Activated CD4-positive, alpha-beta memory T cell treated with anti-CD3 and anti-CD28 coated beads, Interleukin-2, amount 10 ng/mL, durations not matched to agents 7 days and 5 days (primary cell): ENCODE measurements at regions of chr4 and their contacts with region 1.

Region 1: DNA sequence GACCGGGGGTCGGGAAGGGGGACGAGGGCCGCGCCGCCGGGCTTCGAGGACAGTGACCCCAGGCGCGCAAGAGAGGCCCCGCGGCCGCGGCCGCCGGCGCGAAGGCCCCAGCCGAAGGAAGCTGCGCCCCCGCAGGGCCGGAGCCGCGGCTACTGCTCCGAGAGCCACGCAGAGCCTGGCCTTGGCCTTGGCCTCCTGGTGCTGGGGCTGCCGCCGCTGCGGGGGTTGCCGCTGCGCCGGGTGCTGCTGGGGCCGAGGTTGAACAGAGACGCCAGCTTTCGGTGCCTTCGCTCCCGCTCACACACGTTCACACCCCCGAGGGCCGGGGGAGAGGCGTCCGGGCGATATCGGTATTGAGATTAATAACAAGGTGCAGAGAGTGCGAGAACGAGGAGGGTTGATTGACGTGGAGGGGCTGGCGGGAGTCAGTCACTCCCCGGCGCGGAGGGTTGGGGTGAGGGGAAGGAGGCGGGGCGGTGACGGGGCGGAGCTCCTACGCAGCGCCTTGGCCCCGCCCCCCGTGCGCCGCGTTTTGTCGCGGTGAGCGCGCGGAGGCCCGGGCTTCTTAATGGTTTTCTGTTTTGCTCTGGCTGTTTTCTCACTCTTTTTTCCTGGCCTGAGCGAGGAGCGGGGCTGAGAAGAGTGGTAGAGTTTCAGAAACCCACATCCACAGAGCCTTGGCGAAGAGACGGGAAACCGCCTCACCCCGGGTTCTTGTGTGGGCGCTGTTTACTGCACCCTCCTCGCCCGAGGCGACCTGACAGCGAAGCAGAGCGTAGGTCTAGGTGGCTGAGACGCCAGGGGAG is 878 bp upstream of the CNOT6L start:
- DNase-seq: peak; percentile 95
- H3K4me3 Mint-ChIP-seq: peak overlapping the region; percentile 96
- H3K27ac Mint-ChIP-seq: peak overlapping the region; percentile 100
- H3K4me1 Mint-ChIP-seq: peaks cover 45% of the 10 kb centered on the region
- H3K27me3 Mint-ChIP-seq: no peaks in the 10 kb centered on the region

Region 2: GRCh38 chr4:77715414-77716290 is 104.4 kb before region 1 on chr4:
- CTCF ChIA-PET with region 1: no interaction called
- POLR2A ChIA-PET with region 1: interaction called, 11 read pairs
- DNase-seq: no peak
- H3K4me3 Mint-ChIP-seq: no peak overlapping the region
- H3K27ac Mint-ChIP-seq: peak overlapping the region; percentile 54
- H3K4me1 Mint-ChIP-seq: peaks cover 28% of the 10 kb centered on the region
- H3K27me3 Mint-ChIP-seq: no peaks in the 10 kb centered on the region

Region 3: DNA sequence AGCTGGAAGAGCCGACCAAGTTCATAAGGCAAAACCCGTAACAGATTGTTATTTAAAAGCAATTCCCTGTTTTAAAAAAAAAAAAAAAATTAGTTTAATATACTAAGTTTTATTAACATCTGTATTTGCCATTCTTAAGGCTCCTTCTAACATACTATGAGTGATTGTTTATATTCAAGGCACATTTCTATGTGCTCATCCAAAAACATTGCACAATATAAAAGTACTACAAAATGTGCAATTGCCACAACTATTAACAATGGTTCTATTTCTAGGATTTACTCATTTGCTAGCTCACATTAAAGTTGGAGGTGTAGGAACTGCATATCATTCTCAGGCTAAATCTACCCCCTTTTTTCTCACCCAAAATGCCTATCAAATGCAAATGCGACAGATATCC is 46.9 kb before region 1 on chr4:
- CTCF ChIA-PET with region 1: no interaction called
- POLR2A ChIA-PET with region 1: no interaction called
- DNase-seq: no peak
- H3K4me3 Mint-ChIP-seq: no peak overlapping the region
- H3K27ac Mint-ChIP-seq: no peak overlapping the region
- H3K4me1 Mint-ChIP-seq: peaks cover 15% of the 10 kb centered on the region
- H3K27me3 Mint-ChIP-seq: no peaks in the 10 kb centered on the region

Region 4: GRCh38 chr4:77800483-77801259 is 19.4 kb before region 1 on chr4:
- CTCF ChIA-PET with region 1: interaction called, 11 read pairs
- POLR2A ChIA-PET with region 1: interaction called, 61 read pairs
- DNase-seq: no peak
- H3K4me3 Mint-ChIP-seq: peak overlapping the region; percentile 61
- H3K27ac Mint-ChIP-seq: peak overlapping the region; percentile 79
- H3K4me1 Mint-ChIP-seq: peaks cover 52% of the 10 kb centered on the region
- H3K27me3 Mint-ChIP-seq: no peaks in the 10 kb centered on the region

Region 5: GRCh38 chr4:77843628-77844027 is 23.6 kb after region 1 on chr4:
- CTCF ChIA-PET with region 1: interaction called, 3 read pairs
- POLR2A ChIA-PET with region 1: interaction called, 215 read pairs
- DNase-seq: no peak
- H3K4me3 Mint-ChIP-seq: no peak overlapping the region
- H3K27ac Mint-ChIP-seq: no peak overlapping the region
- H3K4me1 Mint-ChIP-seq: peaks cover 12% of the 10 kb centered on the region
- H3K27me3 Mint-ChIP-seq: no peaks in the 10 kb centered on the region

Region 6: GRCh38 chr4:77862478-77863216 is 42.6 kb after region 1 on chr4 and contains the start of gene MRPL1:
- CTCF ChIA-PET with region 1: interaction called, 118 read pairs
- POLR2A ChIA-PET with region 1: interaction called, 611 read pairs
- DNase-seq: peak; percentile 90
- H3K4me3 Mint-ChIP-seq: peak within 1 kb of the TSS; percentile 96
- H3K27ac Mint-ChIP-seq: peak within 1 kb of the TSS; percentile 98
- H3K4me1 Mint-ChIP-seq: peaks cover 54% of the 10 kb centered on the region
- H3K27me3 Mint-ChIP-seq: peaks cover 1% of the 10 kb centered on the region
- total RNA-seq, gene MRPL1: 19.7 to 25.4 TPM